Activated CD4-positive, alpha-beta memory T cell treated with anti-CD3 and anti-CD28 coated beads, Interleukin-2, amount 10 ng/mL, durations not matched to agents 7 days and 5 days (primary cell): ENCODE measurements at regions of chr9 and their contacts with region 1.

Region 1: DNA sequence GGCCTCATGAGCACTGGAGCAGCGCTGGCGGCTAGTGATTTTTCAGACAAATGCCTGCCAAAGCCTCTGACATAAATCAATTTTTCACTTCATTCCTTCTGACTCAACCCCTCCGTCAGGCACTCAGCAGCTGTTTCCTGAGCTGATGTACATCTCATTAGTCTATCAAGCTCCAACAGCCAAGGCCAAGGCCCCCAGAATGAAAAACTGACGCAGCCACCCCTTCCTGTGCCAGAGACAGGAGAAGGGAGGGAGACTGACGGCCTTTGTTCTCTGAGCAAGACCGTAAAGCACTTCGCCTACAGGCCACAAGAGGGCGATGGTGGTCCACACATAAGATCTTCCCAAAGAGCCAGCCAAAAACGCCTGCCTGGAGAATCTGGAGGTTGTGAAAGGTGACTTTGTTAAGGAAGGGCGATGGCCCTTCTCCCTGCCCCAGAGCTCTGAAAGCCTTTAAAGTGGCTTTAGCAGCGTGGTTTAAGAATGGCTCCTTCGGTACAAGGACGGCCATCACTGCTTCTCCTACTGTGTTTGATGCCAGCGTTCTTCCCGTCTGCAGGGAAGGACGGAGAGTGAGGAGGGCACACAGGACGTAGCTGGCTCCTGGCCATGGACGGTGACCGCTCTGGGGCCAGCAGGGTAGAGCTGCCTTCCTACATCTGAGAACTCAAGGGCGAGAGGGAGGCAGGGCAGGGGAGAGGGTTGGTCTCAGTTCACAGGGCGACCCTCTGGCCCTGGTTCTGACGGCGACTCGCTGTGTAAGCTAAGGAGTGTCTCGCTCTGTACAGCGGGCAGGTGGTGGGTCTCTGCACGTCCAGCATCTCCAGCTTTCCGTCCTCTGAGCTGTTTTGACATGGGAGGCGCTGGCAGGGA is 37.0 kb downstream of the ALG2 start:
- DNase-seq: peak; percentile 78
- H3K4me3 Mint-ChIP-seq: no peak overlapping the region
- H3K27ac Mint-ChIP-seq: no peak overlapping the region
- H3K4me1 Mint-ChIP-seq: peaks cover 40% of the 10 kb centered on the region
- H3K27me3 Mint-ChIP-seq: peaks cover 14% of the 10 kb centered on the region

Region 2: DNA sequence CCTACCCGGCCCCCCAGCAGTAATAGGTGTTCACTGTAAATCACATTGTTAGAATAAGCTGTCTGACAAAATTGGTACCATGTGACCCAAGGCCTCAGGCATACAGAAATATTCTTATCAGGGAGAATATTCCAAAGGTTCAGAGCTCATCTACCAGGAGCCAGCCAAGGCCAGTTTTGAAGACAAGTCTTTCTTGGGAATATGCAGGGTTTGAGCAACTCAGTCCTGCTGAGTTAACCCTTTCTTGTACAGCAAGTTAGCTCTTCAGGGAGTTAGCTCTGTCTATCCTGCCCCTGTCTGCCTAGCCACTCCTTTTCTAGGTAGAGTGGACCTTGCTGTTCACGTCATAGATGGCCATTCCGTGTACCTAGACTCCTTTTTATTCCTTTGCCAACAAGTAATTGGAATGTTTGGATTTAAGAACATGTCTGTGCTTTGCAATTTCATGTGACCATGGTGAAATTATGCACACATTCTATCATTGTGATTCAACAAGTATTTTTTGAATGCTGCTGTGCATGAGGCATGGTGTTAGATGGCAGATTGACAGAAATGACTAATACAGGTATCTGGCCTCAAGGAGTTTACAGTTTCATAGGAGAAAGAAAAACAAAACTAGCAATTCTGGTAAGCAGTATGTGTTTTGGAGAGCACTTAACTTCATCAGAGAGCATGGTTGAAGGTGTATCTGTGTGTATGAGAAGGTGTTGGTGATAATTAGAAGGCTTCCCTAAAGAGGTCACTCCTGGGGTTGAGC is 57.2 kb before region 1 on chr9:
- CTCF ChIA-PET with region 1: no interaction called
- POLR2A ChIA-PET with region 1: no interaction called
- DNase-seq: no peak
- H3K4me3 Mint-ChIP-seq: no peak overlapping the region
- H3K27ac Mint-ChIP-seq: no peak overlapping the region
- H3K4me1 Mint-ChIP-seq: peaks cover 53% of the 10 kb centered on the region
- H3K27me3 Mint-ChIP-seq: no peaks in the 10 kb centered on the region

Region 3: DNA sequence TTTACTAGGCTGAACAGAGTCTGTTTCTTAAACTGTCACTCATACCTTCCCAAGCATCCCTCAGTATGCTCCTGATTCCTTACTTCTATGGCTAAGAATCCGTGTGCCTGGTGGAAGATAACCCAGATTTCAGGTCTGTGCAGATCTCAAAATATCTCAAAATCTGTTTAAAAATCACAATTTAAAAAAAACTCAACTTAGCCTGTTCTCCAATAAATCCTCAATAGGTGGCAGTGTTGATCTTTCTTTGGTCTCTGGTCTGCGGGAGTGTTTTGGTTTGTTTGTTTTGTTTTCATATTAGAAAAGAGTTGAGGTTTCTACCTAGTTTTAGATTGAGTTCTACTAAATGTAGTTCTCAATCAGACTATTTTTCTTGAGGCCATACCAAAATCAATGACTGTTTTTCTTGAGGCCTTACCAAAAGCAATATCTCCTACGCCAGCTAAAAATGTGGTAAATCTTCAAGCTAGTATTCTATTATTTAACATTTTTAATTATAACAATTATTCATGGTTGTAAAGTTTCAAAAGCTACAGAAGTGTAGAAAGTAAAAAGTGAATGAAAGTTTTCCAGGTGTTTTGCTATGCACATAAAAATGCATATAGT is 21.8 kb before region 1 on chr9:
- CTCF ChIA-PET with region 1: interaction called, 18 read pairs
- POLR2A ChIA-PET with region 1: no interaction called
- DNase-seq: no peak
- H3K4me3 Mint-ChIP-seq: no peak overlapping the region
- H3K27ac Mint-ChIP-seq: no peak overlapping the region
- H3K4me1 Mint-ChIP-seq: peaks cover 27% of the 10 kb centered on the region
- H3K27me3 Mint-ChIP-seq: peaks cover 27% of the 10 kb centered on the region

Region 4: GRCh38 chr9:99173570-99174504 is 10.9 kb before region 1 on chr9:
- CTCF ChIA-PET with region 1: interaction called, 10 read pairs
- POLR2A ChIA-PET with region 1: no interaction called
- DNase-seq: no peak
- H3K4me3 Mint-ChIP-seq: no peak overlapping the region
- H3K27ac Mint-ChIP-seq: no peak overlapping the region
- H3K4me1 Mint-ChIP-seq: peaks cover 4% of the 10 kb centered on the region
- H3K27me3 Mint-ChIP-seq: peaks cover 2% of the 10 kb centered on the region

Region 5: DNA sequence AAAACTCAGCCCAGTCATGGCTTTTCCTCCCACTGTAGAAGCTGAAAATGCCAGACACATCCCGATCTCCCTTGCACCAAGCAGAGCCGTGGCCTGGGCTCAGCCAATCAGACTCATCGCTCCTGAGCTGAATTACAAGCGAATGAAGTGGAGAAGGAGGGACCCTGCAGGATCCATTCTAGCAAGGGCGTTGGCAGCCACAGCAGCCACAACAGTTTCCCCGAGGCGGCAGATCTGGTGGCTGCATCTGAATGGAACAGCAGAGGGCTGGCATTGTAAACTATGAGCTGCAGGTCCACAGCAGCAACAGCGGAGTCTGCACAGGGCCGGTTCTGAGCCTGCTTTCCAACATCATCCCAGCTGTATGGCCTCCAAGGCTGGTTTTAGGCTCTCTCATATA is 13.3 kb after region 1 on chr9:
- CTCF ChIA-PET with region 1: interaction called, 34 read pairs
- POLR2A ChIA-PET with region 1: interaction called, 6 read pairs
- DNase-seq: no peak
- H3K4me3 Mint-ChIP-seq: no peak overlapping the region
- H3K27ac Mint-ChIP-seq: no peak overlapping the region
- H3K4me1 Mint-ChIP-seq: peaks cover 19% of the 10 kb centered on the region
- H3K27me3 Mint-ChIP-seq: peaks cover 19% of the 10 kb centered on the region

Region 6: GRCh38 chr9:99221621-99222415 is 37.1 kb after region 1 on chr9 and contains the starts of genes ALG2 and SEC61B:
- CTCF ChIA-PET with region 1: interaction called, 38 read pairs
- POLR2A ChIA-PET with region 1: interaction called, 8 read pairs
- DNase-seq: peak; percentile 93
- H3K4me3 Mint-ChIP-seq: peak within 1 kb of the TSS; percentile 98
- H3K27ac Mint-ChIP-seq: peak within 1 kb of the TSS; percentile 97
- H3K4me1 Mint-ChIP-seq: peaks cover 66% of the 10 kb centered on the region
- H3K27me3 Mint-ChIP-seq: no peaks in the 10 kb centered on the region
- total RNA-seq, gene ALG2: 30.0 to 31.9 TPM
- total RNA-seq, gene SEC61B: 148 to 165 TPM

Region 7: DNA sequence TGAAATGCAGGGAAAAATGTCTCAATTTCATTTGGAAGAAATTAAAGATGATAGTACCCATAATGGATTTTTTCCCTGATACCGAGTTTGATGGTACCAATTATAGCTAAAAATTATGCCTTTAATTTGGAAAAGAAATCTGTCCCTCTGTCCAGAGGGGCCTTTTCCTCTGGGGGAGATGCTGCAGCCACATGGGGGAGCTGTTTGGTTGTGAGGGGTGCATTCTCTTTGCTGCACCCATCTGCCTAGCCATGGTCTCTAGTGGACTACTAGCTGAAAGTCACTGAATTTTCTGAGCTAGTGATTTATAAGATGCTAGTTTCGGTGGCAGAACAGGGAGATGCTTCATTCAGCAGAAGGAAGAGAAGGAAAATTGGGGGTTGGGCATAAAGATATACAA is 47.0 kb after region 1 on chr9:
- CTCF ChIA-PET with region 1: interaction called, 10 read pairs
- POLR2A ChIA-PET with region 1: no interaction called
- DNase-seq: peak; percentile 28
- H3K4me3 Mint-ChIP-seq: no peak overlapping the region
- H3K27ac Mint-ChIP-seq: no peak overlapping the region
- H3K4me1 Mint-ChIP-seq: peaks cover 14% of the 10 kb centered on the region
- H3K27me3 Mint-ChIP-seq: no peaks in the 10 kb centered on the region

Region 8: DNA sequence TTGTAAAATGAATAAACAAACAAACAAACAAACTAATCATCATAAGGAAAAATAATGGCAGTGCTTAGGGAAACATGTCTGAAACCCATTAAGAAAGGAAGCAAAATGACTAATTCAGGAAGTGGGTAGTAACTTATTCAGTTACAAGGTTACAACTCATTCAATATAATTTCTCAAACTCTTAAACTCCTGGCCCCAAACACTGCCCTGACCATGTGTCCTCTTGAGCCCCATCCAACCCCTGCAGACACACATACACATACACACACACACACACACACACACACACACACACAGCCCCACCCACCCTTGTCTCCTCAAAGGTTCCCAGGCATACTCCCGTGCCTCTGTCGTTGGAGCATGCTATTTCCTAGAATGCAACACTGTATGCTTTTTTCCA is 231.3 kb after region 1 on chr9:
- CTCF ChIA-PET with region 1: no interaction called
- POLR2A ChIA-PET with region 1: no interaction called
- DNase-seq: no peak
- H3K4me3 Mint-ChIP-seq: no peak overlapping the region
- H3K27ac Mint-ChIP-seq: no peak overlapping the region
- H3K4me1 Mint-ChIP-seq: peaks cover 9% of the 10 kb centered on the region
- H3K27me3 Mint-ChIP-seq: peaks cover 17% of the 10 kb centered on the region